Posterior vena cava (tissue), 2 donors: ENCODE measurements at regions of chr12 and their contacts with region 1.

Region 1: DNA sequence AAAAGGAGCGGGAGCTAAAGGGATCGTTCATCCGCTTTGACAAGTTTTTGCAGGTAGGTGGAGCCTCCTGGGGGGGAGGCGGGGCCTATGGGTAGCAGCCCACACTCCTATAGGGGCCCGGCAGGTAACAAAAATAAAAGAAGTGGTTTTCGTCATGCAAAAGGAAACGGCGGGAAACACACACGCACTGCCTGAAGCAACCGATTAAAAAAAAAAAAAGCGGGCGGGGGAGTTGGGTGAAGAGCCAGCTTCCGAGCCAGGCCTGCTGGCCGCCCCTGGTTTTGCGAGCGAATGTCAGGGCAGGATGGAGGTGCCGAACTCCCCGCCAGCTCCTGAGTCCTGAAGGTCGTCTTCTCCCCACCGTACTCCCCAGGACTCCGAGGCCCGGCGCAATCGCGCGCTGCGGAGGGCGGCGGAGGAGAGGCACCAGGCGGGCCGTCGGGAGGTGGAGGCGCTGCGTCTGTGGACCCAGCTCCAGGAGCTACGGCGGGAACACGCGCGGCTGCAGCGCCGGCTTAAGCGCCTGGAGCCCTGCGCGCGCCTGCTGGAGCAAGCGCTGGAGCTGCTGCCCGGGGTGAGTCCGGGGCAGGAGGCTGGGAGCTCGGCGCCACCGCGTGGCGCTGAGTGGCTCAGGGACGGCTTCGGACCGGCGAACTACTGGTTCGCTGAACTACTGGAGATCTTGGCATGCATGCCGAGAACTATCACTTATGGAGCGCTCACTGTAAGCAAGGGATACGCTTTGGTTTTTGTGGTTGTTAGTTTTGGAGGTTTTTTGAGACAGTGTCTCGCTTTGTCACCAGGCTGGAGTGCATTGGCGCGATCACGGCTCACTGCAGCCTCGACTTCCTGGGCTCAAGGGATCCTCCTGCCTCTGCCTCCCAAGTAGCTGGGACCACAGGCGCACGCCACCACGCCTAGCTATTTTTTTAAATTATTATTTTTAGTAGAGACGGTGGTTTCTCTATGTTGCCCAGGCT is 3.6 kb downstream of the CFAP73 start:
- DNase-seq: peak; percentile 90

Region 2: GRCh38 chr12:113040722-113041171 is 112.4 kb before region 1 on chr12:
- intact Hi-C with region 1: loop called (anchors 5 to 10 kb)
- DNase-seq: peak; percentile 91

Region 3: GRCh38 chr12:113048716-113049127 is 104.4 kb before region 1 on chr12:
- intact Hi-C with region 1: loop called (anchors 5 to 10 kb)
- DNase-seq: no peak

Region 4: GRCh38 chr12:113098446-113098896 is 54.7 kb before region 1 on chr12:
- intact Hi-C with region 1: no loop called
- DNase-seq: peak; percentile 93

Region 5: GRCh38 chr12:113130457-113131135 is 22.5 kb before region 1 on chr12:
- intact Hi-C with region 1: no loop called
- DNase-seq: no peak

Region 6: GRCh38 chr12:113174461-113175384 is 21.6 kb after region 1 on chr12:
- intact Hi-C with region 1: no loop called
- DNase-seq: peak; percentile 93

Region 7: GRCh38 chr12:114777052-114777451 is 1623.9 kb after region 1 on chr12:
- intact Hi-C with region 1: no loop called
- DNase-seq: no peak